ENCODE measurements at regions of chr13 and their contacts with region 1.

Region 1: DNA sequence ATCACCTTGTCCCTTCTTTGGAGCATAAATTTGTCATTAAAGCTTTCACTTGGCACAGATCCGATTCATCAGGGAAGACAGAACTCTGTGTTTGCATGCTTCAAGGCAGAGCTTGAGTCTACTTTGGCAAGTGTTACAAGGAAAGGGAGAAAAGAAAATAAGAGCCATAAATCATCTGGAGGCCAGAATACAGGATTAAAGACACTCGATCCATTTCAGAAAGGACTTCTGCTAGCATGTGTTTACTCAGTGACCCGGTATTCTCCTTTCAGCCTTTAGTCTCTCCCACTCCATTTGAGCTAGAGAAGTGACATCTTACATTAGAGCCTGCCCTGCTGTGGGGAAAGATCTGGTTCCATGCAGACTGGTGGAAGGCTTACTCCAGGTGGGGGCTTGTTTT is 306.4 kb downstream of the KLF5 start:
- DNase-seq: no peak
- H3K4me3 Mint-ChIP-seq: peak overlapping the region; percentile 15
- H3K27ac Mint-ChIP-seq: no peak overlapping the region
- H3K4me1 Mint-ChIP-seq: peaks cover 21% of the 10 kb centered on the region
- H3K27me3 Mint-ChIP-seq: no peaks in the 10 kb centered on the region
- CTCF ChIP-seq: no peak

Region 2: GRCh38 chr13:72696579-72696978 is 668.7 kb before region 1 on chr13:
- CTCF ChIA-PET with region 1: no interaction called
- POLR2A ChIA-PET with region 1: no interaction called
- intact Hi-C with region 1: no loop called
- DNase-seq: peak; percentile 13
- H3K4me3 Mint-ChIP-seq: no peak overlapping the region
- H3K27ac Mint-ChIP-seq: no peak overlapping the region
- H3K4me1 Mint-ChIP-seq: no peaks in the 10 kb centered on the region
- H3K27me3 Mint-ChIP-seq: peaks cover 48% of the 10 kb centered on the region
- CTCF ChIP-seq: peak; percentile 42

Region 3: GRCh38 chr13:73168953-73169401 is 196.3 kb before region 1 on chr13:
- CTCF ChIA-PET with region 1: no interaction called
- POLR2A ChIA-PET with region 1: interaction called, 12 read pairs
- intact Hi-C with region 1: no loop called
- DNase-seq: peak; percentile 18
- H3K4me3 Mint-ChIP-seq: no peak overlapping the region
- H3K27ac Mint-ChIP-seq: peak overlapping the region; percentile 64
- H3K4me1 Mint-ChIP-seq: peaks cover 46% of the 10 kb centered on the region
- H3K27me3 Mint-ChIP-seq: no peaks in the 10 kb centered on the region
- CTCF ChIP-seq: no peak

Region 4: GRCh38 chr13:73286976-73287674 is 78.1 kb before region 1 on chr13:
- CTCF ChIA-PET with region 1: interaction called, 6 read pairs
- POLR2A ChIA-PET with region 1: interaction called, 36 read pairs
- intact Hi-C with region 1: no loop called
- DNase-seq: peak; percentile 49
- H3K4me3 Mint-ChIP-seq: no peak overlapping the region
- H3K27ac Mint-ChIP-seq: peak overlapping the region; percentile 83
- H3K4me1 Mint-ChIP-seq: peaks cover 18% of the 10 kb centered on the region
- H3K27me3 Mint-ChIP-seq: no peaks in the 10 kb centered on the region
- CTCF ChIP-seq: no peak

Region 5: GRCh38 chr13:73355134-73355533 is 10.1 kb before region 1 on chr13:
- CTCF ChIA-PET with region 1: interaction called, 4 read pairs
- POLR2A ChIA-PET with region 1: interaction called, 19 read pairs
- intact Hi-C with region 1: no loop called
- DNase-seq: no peak
- H3K4me3 Mint-ChIP-seq: no peak overlapping the region
- H3K27ac Mint-ChIP-seq: no peak overlapping the region
- H3K4me1 Mint-ChIP-seq: peaks cover 13% of the 10 kb centered on the region
- H3K27me3 Mint-ChIP-seq: no peaks in the 10 kb centered on the region
- CTCF ChIP-seq: no peak

Region 6: DNA sequence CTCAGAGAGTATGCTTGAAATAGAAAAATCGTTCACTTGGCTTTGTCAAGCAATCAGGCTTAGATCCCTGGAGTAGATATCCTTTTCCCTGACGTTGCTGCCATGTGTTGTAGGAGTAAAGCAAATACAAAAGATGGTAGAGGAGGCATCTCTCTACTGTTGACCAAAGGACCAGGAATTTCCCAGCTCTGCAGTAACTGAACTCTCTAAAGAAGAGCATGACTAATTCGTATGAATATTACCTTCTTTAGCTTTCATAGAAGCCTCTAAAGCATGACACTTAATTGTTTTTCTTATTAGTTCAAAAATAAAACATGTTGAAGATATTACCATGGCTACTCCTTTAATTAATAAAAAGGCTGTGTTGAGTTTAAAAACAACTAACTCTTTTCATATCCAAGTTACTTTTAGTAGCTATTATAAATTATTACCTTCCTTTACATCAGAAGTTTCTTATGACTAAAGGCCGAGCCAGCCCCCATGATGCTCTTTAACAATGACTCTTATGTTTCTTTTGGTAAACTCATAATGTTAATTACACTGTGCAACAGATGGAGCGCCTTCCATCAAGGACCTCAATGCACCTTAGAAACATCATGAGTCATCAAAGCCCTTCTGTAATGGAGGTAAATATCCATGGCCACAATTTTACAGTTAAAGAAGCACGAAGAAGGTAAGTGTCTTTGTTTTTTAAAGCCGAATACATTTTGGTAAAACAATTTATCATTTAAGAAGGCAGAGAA is 46.0 kb after region 1 on chr13:
- CTCF ChIA-PET with region 1: interaction called, 11 read pairs
- POLR2A ChIA-PET with region 1: interaction called, 17 read pairs
- intact Hi-C with region 1: no loop called
- DNase-seq: no peak
- H3K4me3 Mint-ChIP-seq: no peak overlapping the region
- H3K27ac Mint-ChIP-seq: no peak overlapping the region
- H3K4me1 Mint-ChIP-seq: peaks cover 10% of the 10 kb centered on the region
- H3K27me3 Mint-ChIP-seq: no peaks in the 10 kb centered on the region
- CTCF ChIP-seq: no peak

Region 7: GRCh38 chr13:73428137-73428536 is 62.9 kb after region 1 on chr13:
- CTCF ChIA-PET with region 1: interaction called, 10 read pairs
- POLR2A ChIA-PET with region 1: interaction called, 72 read pairs
- intact Hi-C with region 1: no loop called
- DNase-seq: peak; percentile 81
- H3K4me3 Mint-ChIP-seq: peak overlapping the region; percentile 7
- H3K27ac Mint-ChIP-seq: peak overlapping the region; percentile 79
- H3K4me1 Mint-ChIP-seq: peaks cover 36% of the 10 kb centered on the region
- H3K27me3 Mint-ChIP-seq: no peaks in the 10 kb centered on the region
- CTCF ChIP-seq: no peak

Region 8: DNA sequence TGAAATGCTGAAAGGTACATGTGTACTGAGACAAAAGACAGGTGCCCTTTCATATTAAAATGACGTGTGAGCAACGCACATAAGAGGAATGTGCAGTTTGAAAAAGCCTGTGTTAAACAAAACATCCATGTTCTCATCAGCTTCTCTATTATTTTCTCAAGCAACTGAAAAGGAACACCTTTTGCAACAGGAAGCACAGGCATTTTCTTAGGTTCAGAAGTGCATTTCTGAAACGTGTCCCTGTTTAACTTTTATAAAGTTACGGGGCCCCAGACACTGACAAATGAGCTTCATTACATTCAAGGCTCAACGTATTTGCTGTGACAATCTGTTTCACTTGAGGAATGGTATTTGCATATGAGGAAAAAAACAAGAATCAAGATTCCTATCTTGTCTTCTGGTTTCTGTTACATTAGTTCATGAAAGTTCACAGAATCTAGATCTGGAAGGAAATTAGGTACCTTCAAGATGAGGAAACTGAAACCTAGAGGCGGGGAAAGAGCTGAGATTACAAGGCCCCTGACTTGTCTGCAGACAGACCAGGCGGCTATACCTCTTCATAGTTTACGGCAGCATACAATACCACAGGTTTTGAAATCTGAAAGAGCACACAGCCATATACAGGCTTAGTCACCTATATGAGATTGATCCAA is 337.3 kb after region 1 on chr13:
- CTCF ChIA-PET with region 1: interaction called, 7 read pairs
- POLR2A ChIA-PET with region 1: interaction called, 49 read pairs
- intact Hi-C with region 1: no loop called
- DNase-seq: peak; percentile 84
- H3K4me3 Mint-ChIP-seq: peak overlapping the region; percentile 63
- H3K27ac Mint-ChIP-seq: peak overlapping the region; percentile 94
- H3K4me1 Mint-ChIP-seq: peaks cover 33% of the 10 kb centered on the region
- H3K27me3 Mint-ChIP-seq: no peaks in the 10 kb centered on the region
- CTCF ChIP-seq: no peak